ENCODE measurements at regions of chr11 and their contacts with region 1.

Region 1: GRCh38 chr11:29051935-29052334 is 943.7 kb downstream of the METTL15 start:
- DNase-seq: no peak
- H3K4me3 ChIP-seq: no peak overlapping the region
- H3K27ac ChIP-seq: no peak overlapping the region
- H3K4me1 ChIP-seq: no peaks in the 10 kb centered on the region
- H3K27me3 ChIP-seq: no peaks in the 10 kb centered on the region
- CTCF ChIP-seq: no peak
- EP300 ChIP-seq: no peak
- POLR2A ChIP-seq: no peak

Region 2: DNA sequence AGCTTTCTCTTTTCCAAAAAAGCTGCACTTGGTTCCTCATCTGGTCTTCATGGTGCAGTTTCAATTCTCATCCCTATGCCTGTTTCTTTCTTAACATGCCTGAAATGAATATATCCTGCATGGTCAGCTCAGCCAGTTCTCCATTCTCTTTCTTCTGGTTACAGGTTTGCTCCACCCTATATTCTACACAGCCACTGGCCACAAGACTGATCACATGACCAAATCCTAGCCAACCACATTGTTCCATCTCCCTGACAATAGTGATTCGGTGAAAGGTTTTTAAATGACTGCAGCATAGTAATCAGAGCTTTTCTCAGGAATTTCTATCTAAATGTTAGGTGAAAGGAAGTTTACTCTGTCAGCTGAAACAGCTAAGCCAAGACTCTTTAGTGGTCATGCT is 52.3 kb before region 1 on chr11:
- intact Hi-C with region 1: loop called (anchors 10 kb)
- DNase-seq: no peak
- H3K4me3 ChIP-seq: no peak overlapping the region
- H3K27ac ChIP-seq: no peak overlapping the region
- H3K4me1 ChIP-seq: no peaks in the 10 kb centered on the region
- H3K27me3 ChIP-seq: no peaks in the 10 kb centered on the region
- CTCF ChIP-seq: no peak
- EP300 ChIP-seq: no peak
- POLR2A ChIP-seq: no peak

Measured in esophagus muscularis mucosa (tissue), 4 donors.